CD8-positive, alpha-beta T cell (primary cell): ENCODE measurements at regions of chr12 and their contacts with region 1.

Region 1: DNA sequence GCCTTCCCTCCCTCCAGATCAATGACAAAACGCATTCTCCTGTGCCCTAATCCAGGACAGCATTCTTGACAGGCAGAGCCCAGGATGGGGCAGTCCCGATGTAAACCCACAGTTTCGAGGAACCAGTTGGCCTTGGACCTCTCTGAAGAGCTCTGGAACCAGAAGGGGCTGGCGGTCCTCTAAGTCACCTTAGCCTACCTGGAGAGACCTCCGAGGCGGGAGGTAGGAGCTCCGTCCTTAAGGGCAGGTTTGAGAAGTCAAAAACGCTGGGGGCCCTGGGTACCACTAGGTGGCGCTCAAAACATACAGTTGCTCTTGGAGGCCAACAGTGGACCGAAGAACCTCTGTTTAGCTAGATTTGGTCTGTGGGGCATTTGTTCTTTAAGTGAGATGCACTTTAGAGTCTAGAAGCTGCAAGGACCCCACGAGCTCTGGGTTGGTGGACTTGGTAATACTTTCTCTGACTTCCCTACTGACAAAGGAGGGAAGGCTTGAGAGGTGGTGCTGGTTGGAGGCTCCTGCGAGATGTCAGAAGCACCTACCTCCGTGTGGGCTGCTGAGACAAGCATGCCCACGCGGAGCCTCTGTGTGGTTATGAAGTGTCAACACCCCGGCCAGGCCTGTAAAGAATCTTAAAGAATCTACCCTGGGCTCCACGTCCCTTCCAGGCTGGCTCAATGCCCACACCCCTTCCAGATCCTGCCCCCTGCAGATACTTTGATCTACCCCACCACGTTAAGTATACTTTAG is 74.8 kb upstream of the CHST11 start:
- DNase-seq: peak; percentile 60 to 91 (median 83)
- ATAC-seq: peak; percentile 93
- H3K4me3 ChIP-seq: no peak overlapping the region
- H3K4me3 Mint-ChIP-seq: no peak overlapping the region
- H3K27ac ChIP-seq: no peak overlapping the region
- H3K27ac Mint-ChIP-seq: no peak overlapping the region
- H3K4me1 ChIP-seq: no peaks in the 10 kb centered on the region
- H3K4me1 Mint-ChIP-seq: peaks cover 8% of the 10 kb centered on the region
- H3K27me3 ChIP-seq: peaks cover 0 to 2% of the 10 kb centered on the region in 2 experiments
- H3K27me3 Mint-ChIP-seq: peaks cover 9% of the 10 kb centered on the region
- CTCF ChIP-seq: peak; percentile 89

Region 2: DNA sequence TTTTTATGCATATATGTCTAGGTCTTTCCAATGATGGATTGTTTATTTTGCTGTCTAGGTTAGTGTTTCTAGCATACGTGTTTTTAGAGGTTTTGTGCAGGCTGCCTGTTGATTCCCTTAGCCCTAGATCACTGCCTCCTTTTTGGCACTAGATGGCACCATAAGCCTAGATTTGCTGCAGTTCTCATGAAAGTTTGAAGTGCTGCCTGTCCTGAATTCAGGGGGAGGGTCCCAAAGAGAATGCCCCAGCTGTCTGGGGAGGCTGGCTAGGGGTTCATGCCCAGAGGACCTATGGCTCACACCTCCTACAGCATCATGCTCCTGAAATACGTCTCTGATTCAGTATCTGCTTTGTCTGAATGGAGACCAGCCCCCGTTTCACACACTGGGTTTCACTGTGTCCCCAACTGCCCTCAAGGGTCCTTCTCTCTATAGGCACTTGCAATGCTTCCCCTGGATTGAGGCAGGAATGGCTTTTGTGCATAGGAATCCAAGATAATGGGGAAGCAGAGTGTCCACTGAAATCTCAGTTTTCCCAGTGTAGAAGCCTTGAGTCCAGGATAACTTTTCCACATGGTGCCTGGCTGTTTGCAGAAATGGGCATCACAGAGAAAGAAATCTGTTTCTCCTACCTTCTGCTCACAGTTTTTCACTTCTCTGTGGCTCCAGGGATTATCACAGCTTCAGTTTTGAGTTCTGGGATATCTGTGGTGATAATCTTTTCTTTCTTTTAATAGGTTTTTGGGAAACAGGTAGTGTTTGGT is 180.5 kb before region 1 on chr12:
- CTCF ChIA-PET with region 1: interaction called, 15 read pairs
- POLR2A ChIA-PET with region 1: no interaction called
- intact Hi-C with region 1: no loop called
- DNase-seq: peak; percentile 7 to 80 (median 39)
- ATAC-seq: peak; percentile 57
- H3K4me3 ChIP-seq: no peak overlapping the region
- H3K4me3 Mint-ChIP-seq: no peak overlapping the region
- H3K27ac ChIP-seq: no peak overlapping the region
- H3K27ac Mint-ChIP-seq: no peak overlapping the region
- H3K4me1 ChIP-seq: no peaks in the 10 kb centered on the region
- H3K4me1 Mint-ChIP-seq: peaks cover 2% of the 10 kb centered on the region
- H3K27me3 ChIP-seq: no peaks in the 10 kb centered on the region
- H3K27me3 Mint-ChIP-seq: peaks cover 15% of the 10 kb centered on the region
- CTCF ChIP-seq: peak; percentile 87

Region 3: GRCh38 chr12:104520242-104520900 is 138.5 kb after region 1 on chr12:
- CTCF ChIA-PET with region 1: interaction called, 7 read pairs
- POLR2A ChIA-PET with region 1: no interaction called
- intact Hi-C with region 1: loop called (anchors 5 to 10 kb)
- DNase-seq: no peak
- ATAC-seq: no peak
- H3K4me3 ChIP-seq: no peak overlapping the region
- H3K4me3 Mint-ChIP-seq: no peak overlapping the region
- H3K27ac ChIP-seq: no peak overlapping the region
- H3K27ac Mint-ChIP-seq: peak overlapping the region; percentile 10
- H3K4me1 ChIP-seq: peaks cover 40% of the 10 kb centered on the region
- H3K4me1 Mint-ChIP-seq: peaks cover 89% of the 10 kb centered on the region
- H3K27me3 ChIP-seq: no peaks in the 10 kb centered on the region
- H3K27me3 Mint-ChIP-seq: no peaks in the 10 kb centered on the region
- CTCF ChIP-seq: no peak

Region 4: DNA sequence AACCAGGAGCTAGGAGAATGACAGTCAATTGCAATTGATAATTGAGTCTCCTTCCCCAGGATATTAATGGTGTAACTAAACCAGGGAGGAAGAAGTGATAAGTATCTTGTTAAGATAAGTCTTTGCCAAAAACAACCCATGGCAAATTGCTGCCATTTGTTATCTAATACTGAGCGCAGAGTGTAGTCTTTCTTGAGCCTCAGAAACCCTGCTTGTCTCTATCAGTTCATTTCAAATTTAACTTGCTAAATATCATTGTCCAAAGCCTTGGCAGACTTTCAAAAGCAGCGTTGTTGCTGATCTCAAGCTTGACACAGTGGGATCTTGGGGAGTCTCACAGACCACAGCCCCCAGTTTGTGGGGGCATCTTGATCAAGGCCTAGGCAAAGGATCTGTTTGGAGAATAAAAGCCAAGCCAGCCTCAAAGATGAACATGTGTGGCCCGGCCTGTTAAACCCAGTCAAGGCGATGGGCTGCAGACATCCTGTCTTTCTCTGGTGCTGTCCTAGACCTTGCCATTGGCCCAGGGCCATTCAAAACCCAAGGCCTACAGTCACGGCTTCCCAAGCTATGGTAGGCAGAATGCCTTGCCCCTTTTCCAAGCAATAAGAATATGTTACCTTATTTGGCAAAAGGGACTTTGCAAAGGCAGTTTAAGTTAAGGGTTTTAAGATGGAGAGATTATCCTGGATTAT is 239.1 kb after region 1 on chr12:
- CTCF ChIA-PET with region 1: no interaction called
- POLR2A ChIA-PET with region 1: no interaction called
- intact Hi-C with region 1: no loop called
- DNase-seq: no peak
- ATAC-seq: no peak
- H3K4me3 ChIP-seq: no peak overlapping the region
- H3K4me3 Mint-ChIP-seq: no peak overlapping the region
- H3K27ac ChIP-seq: no peak overlapping the region
- H3K27ac Mint-ChIP-seq: no peak overlapping the region
- H3K4me1 ChIP-seq: no peaks in the 10 kb centered on the region
- H3K4me1 Mint-ChIP-seq: peaks cover 36% of the 10 kb centered on the region
- H3K27me3 ChIP-seq: no peaks in the 10 kb centered on the region
- H3K27me3 Mint-ChIP-seq: no peaks in the 10 kb centered on the region
- CTCF ChIP-seq: no peak

Region 5: DNA sequence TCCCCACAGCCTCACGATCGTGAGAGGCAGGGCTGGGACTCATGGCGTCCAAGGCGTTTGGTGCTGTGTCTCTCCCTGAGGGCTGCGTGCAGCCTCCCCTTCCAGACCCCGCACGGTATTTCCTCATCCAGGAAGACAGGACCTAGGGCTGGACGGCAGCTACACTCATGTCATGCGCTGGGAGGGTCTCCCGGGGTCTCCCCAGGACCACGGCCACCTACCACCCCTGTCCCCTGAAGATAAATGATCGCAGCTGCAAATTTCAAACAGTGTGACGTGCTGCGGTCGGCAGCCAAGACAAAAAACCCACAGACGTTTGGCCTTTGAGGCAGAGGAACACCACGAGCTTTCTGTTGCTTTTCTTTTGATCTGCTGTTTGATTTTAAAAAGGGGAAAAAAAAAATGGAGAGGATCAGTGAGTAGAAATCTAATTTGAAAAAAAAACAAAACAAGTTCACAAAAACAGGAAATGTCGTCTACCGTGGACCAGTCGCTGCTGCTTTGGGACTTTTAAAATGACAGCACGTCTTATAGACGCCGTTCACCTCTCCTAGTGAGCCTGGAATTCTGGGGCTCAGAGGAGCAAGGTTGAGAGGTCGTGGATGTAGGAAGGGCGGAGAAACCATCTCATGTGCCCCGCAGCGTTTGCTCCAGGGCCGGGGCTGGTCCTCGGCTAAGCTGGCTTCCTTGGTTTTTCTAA is 338.6 kb after region 1 on chr12:
- CTCF ChIA-PET with region 1: interaction called, 13 read pairs
- POLR2A ChIA-PET with region 1: interaction called, 3 read pairs
- intact Hi-C with region 1: no loop called
- DNase-seq: peak; percentile 43 to 92 (median 73)
- ATAC-seq: peak; percentile 77
- H3K4me3 ChIP-seq: peak overlapping the region; percentile 42 to 53
- H3K4me3 Mint-ChIP-seq: peak overlapping the region; percentile 67
- H3K27ac ChIP-seq: peak overlapping the region; percentile 61 to 71
- H3K27ac Mint-ChIP-seq: peak overlapping the region; percentile 87
- H3K4me1 ChIP-seq: peaks cover 49% of the 10 kb centered on the region
- H3K4me1 Mint-ChIP-seq: peaks cover 71% of the 10 kb centered on the region
- H3K27me3 ChIP-seq: no peaks in the 10 kb centered on the region
- H3K27me3 Mint-ChIP-seq: no peaks in the 10 kb centered on the region
- CTCF ChIP-seq: no peak

Region 6: DNA sequence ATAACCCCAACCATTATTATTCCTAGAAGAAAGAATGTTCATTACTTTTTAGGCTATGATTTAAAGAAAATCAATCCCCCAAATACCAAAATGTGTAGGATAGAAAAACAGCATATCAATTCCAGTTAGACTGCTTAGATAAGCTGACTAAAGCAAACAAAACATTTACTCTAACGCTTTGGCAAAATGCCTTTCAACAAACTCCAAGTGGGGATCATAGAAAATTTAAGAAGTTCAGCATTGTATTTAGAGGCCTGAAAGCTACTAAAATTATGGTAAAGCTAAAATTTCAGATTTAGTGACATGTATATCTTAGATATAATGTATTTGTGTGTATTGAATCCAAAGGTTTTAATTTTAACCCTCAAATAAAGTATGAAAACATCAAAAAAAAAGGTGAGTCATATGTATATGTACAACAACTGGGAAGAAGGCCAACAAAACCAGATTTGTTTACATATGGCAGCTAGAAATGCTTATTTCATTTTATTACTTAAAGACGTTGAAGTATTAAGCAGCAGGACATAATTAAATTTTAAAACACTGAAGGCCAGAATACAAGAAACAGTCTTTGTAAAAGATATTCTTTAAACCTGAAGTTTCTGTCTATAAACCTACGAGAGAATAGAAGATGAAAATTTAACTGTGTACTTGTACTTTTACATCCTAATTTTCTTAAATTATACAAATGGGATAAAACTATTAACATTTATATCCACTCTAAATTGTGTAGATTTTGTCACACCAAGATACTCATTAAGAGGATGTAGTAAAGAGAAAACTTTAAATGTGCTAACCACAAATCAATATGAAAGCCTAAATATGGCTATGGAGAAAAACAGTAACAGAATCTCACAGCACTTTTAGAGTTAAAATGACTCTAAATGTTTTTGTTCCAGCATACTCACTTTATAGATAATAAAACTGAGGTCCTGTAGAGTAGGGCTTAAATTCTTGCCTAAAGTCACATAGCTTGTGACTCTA is 504.8 kb after region 1 on chr12:
- CTCF ChIA-PET with region 1: interaction called, 18 read pairs
- POLR2A ChIA-PET with region 1: no interaction called
- intact Hi-C with region 1: no loop called
- DNase-seq: no peak
- ATAC-seq: no peak
- H3K4me3 ChIP-seq: no peak overlapping the region
- H3K4me3 Mint-ChIP-seq: no peak overlapping the region
- H3K27ac ChIP-seq: no peak overlapping the region
- H3K27ac Mint-ChIP-seq: no peak overlapping the region
- H3K4me1 ChIP-seq: no peaks in the 10 kb centered on the region
- H3K4me1 Mint-ChIP-seq: no peaks in the 10 kb centered on the region
- H3K27me3 ChIP-seq: no peaks in the 10 kb centered on the region
- H3K27me3 Mint-ChIP-seq: peaks cover 11% of the 10 kb centered on the region
- CTCF ChIP-seq: no peak

Region 7: GRCh38 chr12:105189293-105189692 is 807.4 kb after region 1 on chr12:
- CTCF ChIA-PET with region 1: no interaction called
- POLR2A ChIA-PET with region 1: no interaction called
- intact Hi-C with region 1: no loop called
- DNase-seq: no peak
- ATAC-seq: no peak
- H3K4me3 ChIP-seq: no peak overlapping the region
- H3K4me3 Mint-ChIP-seq: no peak overlapping the region
- H3K27ac ChIP-seq: no peak overlapping the region
- H3K27ac Mint-ChIP-seq: no peak overlapping the region
- H3K4me1 ChIP-seq: no peaks in the 10 kb centered on the region
- H3K4me1 Mint-ChIP-seq: no peaks in the 10 kb centered on the region
- H3K27me3 ChIP-seq: no peaks in the 10 kb centered on the region
- H3K27me3 Mint-ChIP-seq: no peaks in the 10 kb centered on the region
- CTCF ChIP-seq: no peak

Region 8: GRCh38 chr12:105382771-105383622 is 1001.1 kb after region 1 on chr12:
- CTCF ChIA-PET with region 1: no interaction called
- POLR2A ChIA-PET with region 1: no interaction called
- intact Hi-C with region 1: loop called in 1 of 2 experiments (anchors 5 kb)
- DNase-seq: peak in 3 of 9 experiments; percentile 33 to 76 (median 67)
- ATAC-seq: peak; percentile 75
- H3K4me3 ChIP-seq: no peak overlapping the region
- H3K4me3 Mint-ChIP-seq: no peak overlapping the region
- H3K27ac ChIP-seq: no peak overlapping the region
- H3K27ac Mint-ChIP-seq: no peak overlapping the region
- H3K4me1 ChIP-seq: no peaks in the 10 kb centered on the region
- H3K4me1 Mint-ChIP-seq: no peaks in the 10 kb centered on the region
- H3K27me3 ChIP-seq: no peaks in the 10 kb centered on the region
- H3K27me3 Mint-ChIP-seq: no peaks in the 10 kb centered on the region
- CTCF ChIP-seq: peak; percentile 83